ENCODE measurements at regions of chr6 and their contacts with region 1.

Region 1: GRCh38 chr6:29016559-29017427 is 11.7 kb upstream of the ZNF311 start:
- DNase-seq: peak; percentile 86
- H3K4me3 ChIP-seq: peak overlapping the region; percentile 48 to 59
- H3K27ac ChIP-seq: peak overlapping the region in 1 of 2 donors; percentile 39
- H3K4me1 ChIP-seq: peaks cover 0 to 27% (median 7%) of the 10 kb centered on the region in 4 donors
- H3K27me3 ChIP-seq: peaks cover 0 to 12% of the 10 kb centered on the region in 2 donors
- CTCF ChIP-seq: peak; percentile 69 to 81

Region 2: DNA sequence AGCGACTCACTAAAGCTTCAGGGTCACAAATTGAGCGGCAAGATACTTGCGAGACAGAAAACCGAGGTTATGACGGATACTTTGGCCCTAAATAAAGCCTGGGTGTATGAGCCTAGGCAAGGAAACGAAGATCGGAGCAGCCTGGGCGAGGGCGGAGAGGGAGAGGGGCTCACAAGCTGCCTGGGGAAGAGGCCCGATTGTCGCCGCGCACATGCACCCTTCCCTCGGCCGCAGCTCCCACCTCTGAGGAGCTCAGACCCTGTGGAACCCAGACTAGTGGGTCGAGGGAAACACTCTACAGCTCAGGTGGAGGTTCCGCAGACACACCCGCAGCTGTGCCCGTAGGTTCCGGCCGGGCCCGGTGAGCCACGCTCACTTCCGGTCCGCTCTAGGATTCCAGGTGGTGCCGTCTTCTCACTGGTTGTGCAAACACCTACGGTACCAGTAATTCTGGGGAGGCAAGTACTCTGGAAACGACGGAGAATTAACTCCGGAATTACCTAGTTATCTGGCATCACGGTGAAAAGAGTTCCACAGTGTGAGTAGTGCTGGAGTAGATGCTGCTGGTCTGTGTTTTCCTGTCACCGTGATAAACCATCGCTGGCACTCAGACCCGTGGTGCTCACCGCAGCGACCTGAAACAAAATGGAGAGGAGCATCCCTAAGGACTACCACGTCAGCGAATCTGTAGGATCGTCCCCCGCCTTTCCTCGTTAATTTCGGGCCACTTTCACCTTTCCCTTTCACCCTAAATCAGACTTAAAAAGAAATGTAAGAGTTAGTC is 429.6 kb before region 1 on chr6:
- intact Hi-C with region 1: no loop called
- DNase-seq: no peak
- H3K4me3 ChIP-seq: peak overlapping the region; percentile 53 to 63
- H3K27ac ChIP-seq: peak overlapping the region in 1 of 2 donors; percentile 14
- H3K4me1 ChIP-seq: peaks cover 0 to 16% (median 10%) of the 10 kb centered on the region in 4 donors
- H3K27me3 ChIP-seq: peaks cover 0 to 18% of the 10 kb centered on the region in 2 donors
- CTCF ChIP-seq: no peak

Region 3: GRCh38 chr6:28683944-28684538 is 332.8 kb before region 1 on chr6:
- intact Hi-C with region 1: loop called (anchors 5 kb)
- DNase-seq: no peak
- H3K4me3 ChIP-seq: no peak overlapping the region
- H3K27ac ChIP-seq: no peak overlapping the region
- H3K4me1 ChIP-seq: no peaks in the 10 kb centered on the region
- H3K27me3 ChIP-seq: peaks cover 0 to 50% of the 10 kb centered on the region in 2 donors
- CTCF ChIP-seq: peak; percentile 33 to 38

Region 4: DNA sequence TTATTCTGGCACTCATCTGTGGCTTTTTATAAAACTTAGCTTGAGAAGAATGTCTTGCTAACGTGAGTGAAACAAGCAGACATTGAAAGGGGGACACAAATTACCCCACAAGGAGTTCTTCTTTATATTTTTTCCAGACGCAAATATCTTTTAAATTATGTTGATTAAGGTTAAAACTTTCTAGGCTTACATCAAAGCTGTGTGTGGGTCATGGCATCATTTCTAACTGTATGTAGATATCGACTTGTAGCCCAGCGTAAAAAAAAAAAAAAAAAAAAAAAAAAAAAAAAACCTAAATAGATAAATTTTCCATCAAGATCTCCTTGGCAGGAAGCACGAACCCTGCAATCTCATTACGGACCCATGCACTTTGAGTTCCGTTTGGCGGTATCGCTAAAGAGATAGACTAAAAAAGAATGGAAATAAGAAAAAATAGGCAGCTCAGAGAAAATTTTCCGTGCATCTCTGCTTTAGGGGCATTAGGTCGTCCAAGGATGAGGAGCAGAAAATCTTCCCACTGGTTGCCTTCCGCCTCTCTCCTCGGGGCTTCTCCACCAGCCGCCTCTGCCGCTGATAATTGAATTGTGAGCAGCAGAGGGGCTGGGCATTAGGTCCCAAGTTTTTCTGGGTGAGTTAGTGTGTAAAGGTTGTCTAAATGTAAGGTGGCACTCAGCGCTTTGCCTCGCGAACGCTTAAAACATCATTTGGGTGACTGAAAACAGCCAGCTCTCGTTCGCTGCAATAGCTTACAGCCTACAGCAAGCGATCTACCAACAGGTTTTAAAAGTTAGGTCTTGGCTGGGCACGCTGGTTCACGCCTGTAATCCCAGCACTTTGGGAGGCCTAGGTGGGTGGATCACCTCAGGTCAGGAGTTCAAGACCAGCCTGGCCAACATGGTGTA is 287.0 kb before region 1 on chr6:
- intact Hi-C with region 1: no loop called
- DNase-seq: no peak
- H3K4me3 ChIP-seq: peak overlapping the region; percentile 52 to 53
- H3K27ac ChIP-seq: no peak overlapping the region
- H3K4me1 ChIP-seq: peaks cover 0 to 6% (median 2%) of the 10 kb centered on the region in 4 donors
- H3K27me3 ChIP-seq: peaks cover 0 to 23% of the 10 kb centered on the region in 2 donors
- CTCF ChIP-seq: no peak

Region 5: DNA sequence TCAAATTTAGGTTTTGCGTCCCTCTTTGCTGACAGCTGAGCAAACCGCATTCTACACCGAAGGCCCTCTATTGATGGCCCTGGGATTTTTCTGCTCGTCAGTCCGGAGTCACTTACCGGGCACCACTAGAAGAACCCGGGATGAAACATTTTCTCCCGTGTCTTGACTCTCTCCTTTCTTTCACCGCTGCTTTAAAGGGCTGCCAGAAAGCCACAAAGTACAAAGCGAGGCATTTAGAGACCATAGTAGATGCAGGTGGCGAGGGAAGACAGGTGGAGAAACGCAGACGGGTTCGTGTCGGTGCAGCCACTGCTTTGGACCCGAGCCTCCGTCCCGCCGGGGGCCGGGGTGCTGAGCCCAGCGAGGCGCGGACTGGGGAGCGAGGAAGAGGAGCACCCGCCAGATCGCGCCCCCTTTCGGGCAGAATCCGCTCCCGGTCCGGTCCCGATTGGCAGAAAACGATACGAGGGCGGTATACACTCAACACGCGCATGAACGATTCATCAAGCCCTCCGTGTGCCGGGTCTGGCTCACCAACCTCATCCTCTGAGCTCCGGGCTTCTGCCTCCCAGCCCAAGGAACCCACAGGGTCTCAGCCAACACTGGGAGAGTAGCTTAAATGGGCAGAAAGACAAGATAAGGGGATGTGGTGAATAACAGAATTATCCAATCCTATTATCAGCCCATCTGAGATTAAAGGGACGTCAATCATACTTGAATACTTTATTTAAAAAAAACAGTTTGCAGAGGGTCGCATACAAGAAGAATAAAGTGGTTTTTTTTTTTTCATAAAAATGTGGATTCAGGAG is 178.0 kb before region 1 on chr6:
- intact Hi-C with region 1: loop called (anchors 1 kb)
- DNase-seq: peak; percentile 71 to 87
- H3K4me3 ChIP-seq: peak overlapping the region; percentile 67 to 73
- H3K27ac ChIP-seq: peak overlapping the region; percentile 68 to 79
- H3K4me1 ChIP-seq: peaks cover 0 to 18% (median 6%) of the 10 kb centered on the region in 4 donors
- H3K27me3 ChIP-seq: peaks cover 0 to 8% of the 10 kb centered on the region in 2 donors
- CTCF ChIP-seq: peak; percentile 38 to 46

Region 6: DNA sequence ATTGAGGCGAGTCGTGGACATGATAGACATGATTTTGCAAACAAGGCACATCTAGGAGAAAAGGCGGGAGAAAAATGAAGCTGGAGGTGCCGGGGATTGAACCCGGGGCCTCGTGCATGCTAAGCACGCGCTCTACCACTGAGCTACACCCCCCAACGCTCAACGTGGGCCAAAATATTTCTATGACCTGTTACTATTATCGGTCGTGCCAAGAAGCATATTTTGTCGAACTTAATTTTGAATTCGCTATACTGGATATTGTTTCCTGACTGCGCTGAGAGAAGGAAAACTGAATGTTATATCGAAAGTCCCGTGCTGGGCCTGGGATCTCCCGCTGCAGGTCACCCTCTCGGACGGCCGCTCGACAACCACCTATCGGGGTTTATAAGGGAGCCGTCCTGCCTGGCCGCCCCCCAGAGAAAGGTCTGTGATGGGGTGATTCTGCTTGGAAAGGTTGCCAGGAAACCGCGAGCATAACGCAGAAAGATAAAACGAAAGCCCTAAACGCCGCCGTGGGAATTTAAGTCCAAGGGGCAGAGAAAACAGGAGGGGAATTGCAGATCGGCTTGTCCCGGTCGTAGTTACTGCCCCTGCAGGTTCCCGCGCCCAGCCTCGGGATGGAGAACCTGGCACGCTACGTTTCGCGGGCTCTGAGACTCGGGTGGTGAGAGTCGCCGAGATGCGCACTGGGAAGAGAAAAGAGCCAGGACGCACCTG is 153.0 kb before region 1 on chr6:
- intact Hi-C with region 1: loop called (anchors 10 kb)
- DNase-seq: peak; percentile 66 to 76
- H3K4me3 ChIP-seq: peak overlapping the region; percentile 63 to 76
- H3K27ac ChIP-seq: peak overlapping the region; percentile 65 to 75
- H3K4me1 ChIP-seq: peaks cover 0 to 17% (median 8%) of the 10 kb centered on the region in 4 donors
- H3K27me3 ChIP-seq: no peaks in the 10 kb centered on the region
- CTCF ChIP-seq: no peak

Region 7: GRCh38 chr6:28929887-28930620 is 86.7 kb before region 1 on chr6:
- intact Hi-C with region 1: no loop called
- DNase-seq: no peak
- H3K4me3 ChIP-seq: no peak overlapping the region
- H3K27ac ChIP-seq: no peak overlapping the region
- H3K4me1 ChIP-seq: no peaks in the 10 kb centered on the region
- H3K27me3 ChIP-seq: peaks cover 0 to 10% of the 10 kb centered on the region in 2 donors
- CTCF ChIP-seq: no peak

Region 8: GRCh38 chr6:28947831-28948270 is 68.9 kb before region 1 on chr6:
- intact Hi-C with region 1: loop called (anchors 2 kb)
- DNase-seq: no peak
- H3K4me3 ChIP-seq: no peak overlapping the region
- H3K27ac ChIP-seq: no peak overlapping the region
- H3K4me1 ChIP-seq: peaks cover 0 to 6% (median 3%) of the 10 kb centered on the region in 4 donors
- H3K27me3 ChIP-seq: no peaks in the 10 kb centered on the region
- CTCF ChIP-seq: no peak

Measured in tibial artery (tissue), 4 donors.